CD4-positive, alpha-beta T cell (primary cell): ENCODE measurements at regions of chr22 and their contacts with region 1.

Region 1: GRCh38 chr22:31943976-31944699 is at the start of gene YWHAH:
- DNase-seq: peak; percentile 72 to 93 (median 81)
- ATAC-seq: peak; percentile 65
- H3K4me3 ChIP-seq: peak within 1 kb of the TSS; percentile 73
- H3K4me3 Mint-ChIP-seq: peak within 1 kb of the TSS; percentile 94
- H3K27ac ChIP-seq: peak within 1 kb of the TSS; percentile 77 to 84
- H3K27ac Mint-ChIP-seq: no peak within 1 kb of the TSS
- H3K4me1 ChIP-seq: peaks cover 27% of the 10 kb centered on the region
- H3K4me1 Mint-ChIP-seq: peaks cover 19% of the 10 kb centered on the region
- H3K27me3 ChIP-seq: no peaks in the 10 kb centered on the region
- H3K27me3 Mint-ChIP-seq: no peaks in the 10 kb centered on the region
- CTCF ChIP-seq: no peak
- total RNA-seq, gene YWHAH: 24.4 to 26.1 TPM

Region 2: DNA sequence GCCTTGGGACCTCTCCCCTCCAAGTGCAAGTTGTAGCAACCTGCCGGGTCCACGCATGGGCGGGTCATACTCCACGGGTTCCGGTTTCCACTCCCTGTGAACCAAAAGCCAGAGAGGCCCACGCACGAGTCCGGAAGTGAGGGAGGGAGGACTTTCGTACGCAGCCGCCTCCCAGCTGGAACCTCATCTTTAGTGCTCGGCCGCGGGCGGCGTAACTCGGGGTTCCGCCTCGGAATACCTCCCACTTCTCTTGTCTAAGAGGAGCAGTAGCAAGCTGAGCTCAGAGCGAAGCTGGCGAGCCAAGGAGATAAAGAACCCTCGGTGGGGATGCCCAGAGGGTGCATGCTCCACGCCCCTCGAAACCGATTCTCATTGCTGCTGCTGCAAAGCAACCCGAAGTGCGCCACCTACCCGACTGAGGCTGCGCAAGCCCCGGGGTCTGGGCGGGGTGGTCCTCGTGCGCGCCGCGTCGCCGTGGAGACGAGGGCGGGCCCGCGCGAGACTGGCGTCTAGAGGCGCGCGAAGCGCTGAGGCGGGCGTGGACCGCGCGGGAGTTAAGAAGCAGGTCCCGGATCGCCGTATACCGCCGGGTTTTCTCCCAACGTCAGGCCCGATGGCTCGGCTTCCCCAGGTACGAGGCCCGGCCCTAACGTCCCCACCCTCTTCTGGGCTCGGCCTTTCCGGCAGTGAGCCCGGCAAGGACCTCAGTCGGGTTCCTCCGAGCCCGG is 448.0 kb before region 1 on chr22 and contains the start of gene SFI1:
- CTCF ChIA-PET with region 1: no interaction called
- POLR2A ChIA-PET with region 1: no interaction called
- intact Hi-C with region 1: loop called in 1 of 2 experiments (anchors 2 kb)
- DNase-seq: peak; percentile 93 to 98 (median 96)
- ATAC-seq: peak; percentile 78
- H3K4me3 ChIP-seq: peak within 1 kb of the TSS; percentile 100
- H3K4me3 Mint-ChIP-seq: peak within 1 kb of the TSS; percentile 82
- H3K27ac ChIP-seq: peak within 1 kb of the TSS; percentile 94 to 97
- H3K27ac Mint-ChIP-seq: peak within 1 kb of the TSS; percentile 97
- H3K4me1 ChIP-seq: peaks cover 64% of the 10 kb centered on the region
- H3K4me1 Mint-ChIP-seq: peaks cover 57% of the 10 kb centered on the region
- H3K27me3 ChIP-seq: no peaks in the 10 kb centered on the region
- H3K27me3 Mint-ChIP-seq: no peaks in the 10 kb centered on the region
- CTCF ChIP-seq: peak; percentile 37
- total RNA-seq, gene SFI1: 281 to 291 TPM

Region 3: GRCh38 chr22:31818481-31819392 is 125.4 kb before region 1 on chr22:
- CTCF ChIA-PET with region 1: no interaction called
- POLR2A ChIA-PET with region 1: no interaction called
- intact Hi-C with region 1: loop called in 1 of 2 experiments (anchors 5 kb)
- DNase-seq: no peak
- ATAC-seq: no peak
- H3K4me3 ChIP-seq: no peak overlapping the region
- H3K4me3 Mint-ChIP-seq: no peak overlapping the region
- H3K27ac ChIP-seq: no peak overlapping the region
- H3K27ac Mint-ChIP-seq: no peak overlapping the region
- H3K4me1 ChIP-seq: no peaks in the 10 kb centered on the region
- H3K4me1 Mint-ChIP-seq: no peaks in the 10 kb centered on the region
- H3K27me3 ChIP-seq: no peaks in the 10 kb centered on the region
- H3K27me3 Mint-ChIP-seq: no peaks in the 10 kb centered on the region
- CTCF ChIP-seq: no peak

Region 4: GRCh38 chr22:31872209-31872608 is 71.9 kb before region 1 on chr22:
- CTCF ChIA-PET with region 1: no interaction called
- POLR2A ChIA-PET with region 1: no interaction called
- intact Hi-C with region 1: loop called (anchors 1 to 5 kb)
- DNase-seq: peak in 7 of 14 experiments; percentile 1 to 40 (median 23)
- ATAC-seq: no peak
- H3K4me3 ChIP-seq: no peak overlapping the region
- H3K4me3 Mint-ChIP-seq: no peak overlapping the region
- H3K27ac ChIP-seq: no peak overlapping the region
- H3K27ac Mint-ChIP-seq: no peak overlapping the region
- H3K4me1 ChIP-seq: no peaks in the 10 kb centered on the region
- H3K4me1 Mint-ChIP-seq: no peaks in the 10 kb centered on the region
- H3K27me3 ChIP-seq: no peaks in the 10 kb centered on the region
- H3K27me3 Mint-ChIP-seq: no peaks in the 10 kb centered on the region
- CTCF ChIP-seq: no peak

Region 5: GRCh38 chr22:31970490-31971444 is 26.6 kb after region 1 on chr22:
- CTCF ChIA-PET with region 1: interaction called, 17 read pairs
- POLR2A ChIA-PET with region 1: interaction called, 5 read pairs
- intact Hi-C with region 1: loop called (anchors 1 to 2 kb)
- DNase-seq: peak; percentile 77 to 93 (median 87)
- ATAC-seq: peak; percentile 93
- H3K4me3 ChIP-seq: peak overlapping the region; percentile 56
- H3K4me3 Mint-ChIP-seq: peak overlapping the region; percentile 82
- H3K27ac ChIP-seq: no peak overlapping the region
- H3K27ac Mint-ChIP-seq: peak overlapping the region; percentile 3
- H3K4me1 ChIP-seq: peaks cover 20% of the 10 kb centered on the region
- H3K4me1 Mint-ChIP-seq: peaks cover 13% of the 10 kb centered on the region
- H3K27me3 ChIP-seq: no peaks in the 10 kb centered on the region
- H3K27me3 Mint-ChIP-seq: no peaks in the 10 kb centered on the region
- CTCF ChIP-seq: peak; percentile 90